HEK293 (cell line): ENCODE measurements at regions of chr14 and their contacts with region 1.

Region 1: GRCh38 chr14:104224506-104225277 is 86.3 kb downstream of the KIF26A start:
- H3K4me3 ChIP-seq: no peak overlapping the region
- H3K27ac ChIP-seq: no peak overlapping the region
- H3K4me1 ChIP-seq: no peaks in the 10 kb centered on the region
- CTCF ChIP-seq: 0 out of 2 replicates have a peak, but pooled peaks have one; percentile 40

Region 2: GRCh38 chr14:104192146-104192882 is 32.4 kb before region 1 on chr14:
- CTCF ChIA-PET with region 1: no interaction called
- POLR2A ChIA-PET with region 1: no interaction called
- H3K4me3 ChIP-seq: no peak overlapping the region
- H3K27ac ChIP-seq: no peak overlapping the region
- H3K4me1 ChIP-seq: no peaks in the 10 kb centered on the region
- CTCF ChIP-seq: no peak

Region 3: GRCh38 chr14:104211215-104211614 is 13.5 kb before region 1 on chr14:
- CTCF ChIA-PET with region 1: no interaction called
- POLR2A ChIA-PET with region 1: no interaction called
- H3K4me3 ChIP-seq: no peak overlapping the region
- H3K27ac ChIP-seq: no peak overlapping the region
- H3K4me1 ChIP-seq: no peaks in the 10 kb centered on the region; the same call in 1 of the 2 replicates
- CTCF ChIP-seq: no peak

Region 4: GRCh38 chr14:104267895-104268294 is 43.2 kb after region 1 on chr14:
- CTCF ChIA-PET with region 1: interaction called, 12 read pairs
- POLR2A ChIA-PET with region 1: no interaction called
- H3K4me3 ChIP-seq: no peak overlapping the region
- H3K27ac ChIP-seq: no peak overlapping the region
- H3K4me1 ChIP-seq: no peaks in the 10 kb centered on the region
- CTCF ChIP-seq: no peak